Activated CD8-positive, alpha-beta memory T cell treated with anti-CD3 and anti-CD28 coated beads, Interleukin-2, amount 10 ng/mL, durations not matched to agents 7 days and 5 days (primary cell): ENCODE measurements at regions of chr11 and their contacts with region 1.

Region 1: DNA sequence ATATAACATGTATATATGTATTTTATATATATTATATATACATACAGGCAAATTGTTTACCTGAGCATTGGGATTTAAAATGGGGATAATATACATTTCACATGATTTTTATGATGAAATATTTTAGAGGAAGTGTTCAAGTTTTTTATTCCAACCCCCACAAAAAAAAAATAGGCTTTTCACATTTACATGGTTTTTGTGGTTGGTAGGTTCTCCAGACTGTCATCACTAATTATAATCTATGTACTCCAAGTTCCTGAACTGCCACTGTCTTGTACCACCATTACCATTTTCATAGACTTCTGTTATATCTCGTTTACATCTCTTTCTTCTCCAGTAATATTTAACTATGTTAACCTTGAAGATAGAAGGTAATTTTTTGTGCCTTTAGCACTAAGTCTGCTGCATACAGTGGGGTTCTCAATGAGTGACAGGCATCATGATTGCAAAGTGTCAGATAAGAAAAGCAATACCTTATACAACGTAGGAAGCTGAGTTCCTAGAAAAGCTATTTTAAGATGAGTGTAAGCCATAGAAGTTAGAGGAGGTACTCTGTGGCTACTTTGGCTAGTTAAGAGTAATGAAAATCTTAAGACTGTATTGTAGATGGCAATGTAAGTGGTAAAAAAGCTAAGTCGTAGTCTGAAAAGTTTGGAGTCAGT is 5.2 kb downstream of the TMEM126A start:
- DNase-seq: no peak
- ATAC-seq: no peak
- H3K4me3 Mint-ChIP-seq: peak overlapping the region; percentile 22
- H3K27ac Mint-ChIP-seq: peak overlapping the region; percentile 48
- H3K4me1 Mint-ChIP-seq: peaks cover 53% of the 10 kb centered on the region
- H3K27me3 Mint-ChIP-seq: no peaks in the 10 kb centered on the region

Region 2: GRCh38 chr11:85664615-85665481 is 11.9 kb after region 1 on chr11 and contains the start of gene CREBZF:
- CTCF ChIA-PET with region 1: interaction called, 13 read pairs
- DNase-seq: peak; percentile 96
- ATAC-seq: peak; percentile 74
- H3K4me3 Mint-ChIP-seq: peak within 1 kb of the TSS; percentile 97
- H3K27ac Mint-ChIP-seq: peak within 1 kb of the TSS; percentile 99
- H3K4me1 Mint-ChIP-seq: peaks cover 35% of the 10 kb centered on the region
- H3K27me3 Mint-ChIP-seq: no peaks in the 10 kb centered on the region
- total RNA-seq, gene CREBZF: 61.0 to 72.3 TPM